Posterior vena cava (tissue), 2 donors: ENCODE measurements at regions of chr1 and their contacts with region 1.

Region 1: DNA sequence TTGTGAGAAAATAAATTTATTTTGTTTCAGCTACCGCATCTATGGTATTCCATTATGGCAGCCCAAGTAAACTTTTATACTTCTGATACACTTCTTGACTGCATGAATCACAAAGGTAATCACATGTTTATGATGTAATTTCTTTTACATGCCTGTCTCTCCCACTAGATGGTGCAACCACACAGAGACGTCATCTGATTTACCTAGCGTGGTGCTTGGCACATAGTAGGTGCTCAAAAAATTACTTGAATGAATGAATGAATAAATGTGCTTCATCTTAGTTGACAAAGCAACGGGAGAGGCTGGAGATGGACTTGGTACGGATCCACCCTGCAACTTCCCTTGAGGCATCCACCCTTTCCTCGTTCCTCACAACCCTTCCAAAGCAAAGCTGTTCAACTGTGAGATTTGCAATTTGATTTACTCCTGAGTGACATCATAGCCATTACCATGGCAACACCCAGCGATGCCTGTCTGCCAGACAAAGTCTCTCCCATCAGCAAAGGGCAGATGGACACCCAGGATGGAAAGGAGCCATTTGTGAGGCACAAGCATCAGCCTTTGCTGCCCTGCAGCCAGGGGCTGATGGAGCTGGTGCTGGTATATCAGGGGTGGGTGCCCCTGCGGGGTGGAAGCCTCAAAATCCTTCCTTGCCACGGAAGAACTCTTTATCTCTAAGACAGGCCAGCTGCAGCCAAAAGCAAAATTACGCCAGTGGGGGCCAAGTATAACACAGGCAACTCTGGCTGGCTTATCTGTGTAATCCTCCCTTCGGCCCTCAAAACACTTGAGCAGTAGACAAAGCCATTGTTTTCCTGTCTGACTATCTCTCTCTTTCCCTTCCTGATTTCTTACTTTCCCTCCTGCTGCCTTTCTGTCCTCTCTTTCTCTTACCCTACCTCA is 18.9 kb upstream of the VWA5B1 start:
- DNase-seq: no peak

Region 2: GRCh38 chr1:20248971-20249612 is 22.7 kb before region 1 on chr1:
- intact Hi-C with region 1: loop called in 1 of 2 experiments (anchors 1 kb)
- DNase-seq: no peak